Naive thymus-derived CD4-positive, alpha-beta T cell (primary cell): ENCODE measurements at regions of chr1 and their contacts with region 1.

Region 1: DNA sequence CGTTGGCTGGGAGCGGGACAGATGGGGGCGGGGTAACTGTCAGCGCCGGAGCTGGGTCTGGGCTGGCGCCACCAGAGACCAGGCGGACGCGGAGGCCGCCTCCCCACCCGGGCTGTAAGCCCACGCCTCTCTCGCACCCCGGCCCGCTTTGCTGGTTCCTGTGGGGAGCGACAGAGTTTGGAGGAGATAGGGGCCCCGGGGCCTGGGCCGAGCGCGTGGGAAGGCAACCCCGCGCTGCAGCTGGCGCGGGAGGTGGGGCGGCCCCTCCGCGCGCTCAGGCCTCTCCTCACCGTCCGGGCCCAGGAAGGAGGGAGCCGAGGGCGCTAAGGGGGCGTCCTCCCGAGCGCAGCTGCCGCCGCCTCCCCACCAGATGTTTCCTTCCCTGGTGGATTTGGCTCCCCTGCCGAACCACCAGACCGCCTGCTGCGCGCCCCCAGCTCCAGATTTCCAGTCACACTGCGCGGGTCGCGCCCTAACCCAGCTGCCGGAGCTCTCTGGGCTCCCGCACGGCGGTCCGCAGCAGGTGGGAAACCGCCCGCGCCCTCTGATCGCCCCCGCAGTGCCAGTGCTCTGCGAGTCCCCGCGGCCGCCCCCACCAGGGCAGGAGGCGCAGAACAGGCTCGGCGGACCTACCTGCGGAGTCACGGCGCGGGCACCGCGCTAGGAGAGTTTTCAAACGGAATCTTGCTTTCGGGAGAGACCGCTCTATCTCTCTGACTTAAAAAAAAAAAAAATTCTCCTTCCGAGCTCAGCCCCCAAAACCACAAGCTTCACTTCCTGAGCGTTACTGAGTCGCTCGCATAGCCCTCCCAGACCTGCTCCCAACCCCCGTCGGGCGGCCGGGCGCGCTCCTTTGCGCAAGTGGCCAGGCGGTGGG is 1.1 kb downstream of the GFI1 start:
- DNase-seq: peak; percentile 60 to 89 (median 74)
- ATAC-seq: peak; percentile 77
- H3K4me3 ChIP-seq: peak overlapping the region; percentile 83
- H3K4me3 Mint-ChIP-seq: peak overlapping the region; percentile 91 to 99 (median 94)
- H3K27ac ChIP-seq: peak overlapping the region; percentile 67
- H3K27ac Mint-ChIP-seq: peak overlapping the region; percentile 85 to 93 (median 90)
- H3K4me1 ChIP-seq: peaks cover 14 to 15% of the 10 kb centered on the region in 2 donors
- H3K4me1 Mint-ChIP-seq: peaks cover 26 to 45% (median 37%) of the 10 kb centered on the region in 7 donors
- H3K27me3 ChIP-seq: no peaks in the 10 kb centered on the region
- H3K27me3 Mint-ChIP-seq: peaks cover 0 to 3% (median 0%) of the 10 kb centered on the region in 5 donors

Region 2: DNA sequence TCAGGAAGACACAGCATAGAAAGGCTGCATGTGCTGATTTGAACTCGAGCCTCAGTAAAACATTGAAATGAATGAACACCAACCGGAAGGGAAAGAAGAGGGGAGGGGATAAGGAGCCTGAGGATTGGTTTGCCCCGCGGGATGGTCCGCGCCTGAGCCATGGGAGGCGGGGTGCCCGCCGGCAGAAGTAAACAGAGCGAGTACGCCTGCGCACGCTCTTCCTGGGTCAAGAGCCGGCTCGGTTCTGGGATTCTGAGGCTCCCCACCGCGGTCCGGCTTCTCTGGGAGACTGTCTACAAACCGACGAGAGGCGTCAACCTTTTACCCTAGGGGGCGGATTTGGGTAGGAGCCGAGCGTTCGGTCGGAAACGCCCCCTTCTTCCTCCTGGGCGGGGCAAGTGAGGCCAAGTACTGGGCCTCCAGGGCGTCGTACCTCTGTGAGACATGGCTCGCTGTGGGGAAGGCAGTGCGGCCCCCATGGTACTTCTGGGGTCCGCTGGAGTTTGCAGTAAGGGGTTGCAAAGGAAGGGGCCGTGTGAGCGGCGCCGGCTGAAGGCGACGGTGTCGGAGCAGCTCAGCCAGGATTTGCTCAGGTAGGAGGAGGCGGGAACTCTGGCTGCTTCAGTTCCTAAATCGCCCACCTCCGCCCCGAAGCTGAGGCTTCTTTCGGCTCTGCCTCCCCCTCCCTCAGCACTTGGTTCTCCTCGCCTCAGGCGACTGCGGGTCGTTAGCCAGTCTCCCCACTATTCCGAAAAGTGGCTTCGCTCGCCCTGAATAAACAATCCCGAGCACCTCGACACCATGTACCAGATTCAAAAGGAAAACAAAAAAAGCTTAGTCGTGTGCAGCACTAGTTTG is 405.3 kb before region 1 on chr1 and contains the start of gene BTBD8:
- CTCF ChIA-PET with region 1: no interaction called
- POLR2A ChIA-PET with region 1: no interaction called
- intact Hi-C with region 1: loop called in 1 of 2 experiments (anchors 2 kb)
- DNase-seq: peak; percentile 67 to 87 (median 85)
- ATAC-seq: peak; percentile 98
- H3K4me3 ChIP-seq: peak within 1 kb of the TSS; percentile 79
- H3K4me3 Mint-ChIP-seq: peak within 1 kb of the TSS; percentile 87 to 99 (median 98)
- H3K27ac ChIP-seq: peak within 1 kb of the TSS; percentile 74
- H3K27ac Mint-ChIP-seq: peak within 1 kb of the TSS; percentile 85 to 97 (median 93)
- H3K4me1 ChIP-seq: peaks cover 0 to 3% of the 10 kb centered on the region in 2 donors
- H3K4me1 Mint-ChIP-seq: peaks cover 5 to 36% (median 29%) of the 10 kb centered on the region in 7 donors
- H3K27me3 ChIP-seq: no peaks in the 10 kb centered on the region
- H3K27me3 Mint-ChIP-seq: no peaks in the 10 kb centered on the region
- total RNA-seq, gene BTBD8: 2.4 to 11.4 (median 5.3) TPM

Region 3: DNA sequence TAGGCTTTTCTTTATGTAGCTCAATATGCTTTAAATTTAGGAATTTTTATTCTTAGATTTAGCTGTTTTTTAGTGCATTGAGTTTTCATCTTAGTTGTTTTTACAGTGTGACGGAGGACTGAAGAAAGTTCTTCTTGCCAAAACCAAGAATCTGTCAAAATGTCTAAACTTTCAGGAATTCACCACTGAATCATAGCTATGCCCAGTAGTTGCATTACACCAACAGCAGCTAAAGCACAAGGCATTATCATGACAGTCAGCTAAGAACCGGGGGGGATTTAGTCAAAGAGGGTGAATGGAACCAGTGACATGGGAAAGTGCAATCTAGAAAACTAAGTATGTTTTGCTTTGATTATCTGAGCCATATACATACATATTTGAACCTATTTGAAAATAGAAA is 274.5 kb before region 1 on chr1:
- CTCF ChIA-PET with region 1: no interaction called
- POLR2A ChIA-PET with region 1: no interaction called
- intact Hi-C with region 1: no loop called
- DNase-seq: no peak
- ATAC-seq: no peak
- H3K4me3 ChIP-seq: no peak overlapping the region
- H3K4me3 Mint-ChIP-seq: no peak overlapping the region
- H3K27ac ChIP-seq: no peak overlapping the region
- H3K27ac Mint-ChIP-seq: no peak overlapping the region
- H3K4me1 ChIP-seq: peaks cover 0 to 17% of the 10 kb centered on the region in 2 donors
- H3K4me1 Mint-ChIP-seq: peaks cover 7 to 33% (median 23%) of the 10 kb centered on the region in 7 donors
- H3K27me3 ChIP-seq: no peaks in the 10 kb centered on the region
- H3K27me3 Mint-ChIP-seq: peaks cover 0 to 2% (median 0%) of the 10 kb centered on the region in 5 donors

Region 4: GRCh38 chr1:92317836-92318493 is 167.7 kb before region 1 on chr1:
- CTCF ChIA-PET with region 1: interaction called, 8 read pairs
- POLR2A ChIA-PET with region 1: interaction called, 6 read pairs
- intact Hi-C with region 1: loop called (anchors 1 kb)
- DNase-seq: peak in 3 of 9 donors; percentile 7 to 27 (median 8)
- ATAC-seq: peak; percentile 46
- H3K4me3 ChIP-seq: no peak overlapping the region
- H3K4me3 Mint-ChIP-seq: peak overlapping the region; percentile 16 to 83 (median 65)
- H3K27ac ChIP-seq: no peak overlapping the region
- H3K27ac Mint-ChIP-seq: peak overlapping the region; percentile 61 to 96 (median 78)
- H3K4me1 ChIP-seq: peaks cover 40 to 55% of the 10 kb centered on the region in 2 donors
- H3K4me1 Mint-ChIP-seq: peaks cover 35 to 64% (median 62%) of the 10 kb centered on the region in 7 donors
- H3K27me3 ChIP-seq: no peaks in the 10 kb centered on the region
- H3K27me3 Mint-ChIP-seq: no peaks in the 10 kb centered on the region

Region 5: GRCh38 chr1:92502247-92502646 is 16.6 kb after region 1 on chr1:
- CTCF ChIA-PET with region 1: no interaction called
- POLR2A ChIA-PET with region 1: interaction called, 4 read pairs
- intact Hi-C with region 1: loop called (anchors 2 kb)
- DNase-seq: no peak
- ATAC-seq: no peak
- H3K4me3 ChIP-seq: no peak overlapping the region
- H3K4me3 Mint-ChIP-seq: no peak overlapping the region
- H3K27ac ChIP-seq: no peak overlapping the region
- H3K27ac Mint-ChIP-seq: peak overlapping the region in 1 of 9 donors; percentile 23
- H3K4me1 ChIP-seq: no peaks in the 10 kb centered on the region
- H3K4me1 Mint-ChIP-seq: peaks cover 11 to 38% (median 24%) of the 10 kb centered on the region in 7 donors
- H3K27me3 ChIP-seq: no peaks in the 10 kb centered on the region
- H3K27me3 Mint-ChIP-seq: no peaks in the 10 kb centered on the region

Region 6: GRCh38 chr1:92583821-92584760 is 98.5 kb after region 1 on chr1:
- CTCF ChIA-PET with region 1: interaction called, 6 read pairs
- POLR2A ChIA-PET with region 1: interaction called, 5 read pairs
- intact Hi-C with region 1: loop called (anchors 1 kb)
- DNase-seq: peak in 7 of 9 donors; percentile 50 to 82 (median 76)
- ATAC-seq: peak; percentile 93
- H3K4me3 ChIP-seq: peak overlapping the region; percentile 30
- H3K4me3 Mint-ChIP-seq: peak overlapping the region; percentile 25 to 88 (median 68)
- H3K27ac ChIP-seq: peak overlapping the region; percentile 47
- H3K27ac Mint-ChIP-seq: peak overlapping the region; percentile 41 to 93 (median 86)
- H3K4me1 ChIP-seq: peaks cover 27 to 38% of the 10 kb centered on the region in 2 donors
- H3K4me1 Mint-ChIP-seq: peaks cover 22 to 66% (median 63%) of the 10 kb centered on the region in 7 donors
- H3K27me3 ChIP-seq: no peaks in the 10 kb centered on the region
- H3K27me3 Mint-ChIP-seq: no peaks in the 10 kb centered on the region

Region 7: GRCh38 chr1:92960395-92961130 is 474.9 kb after region 1 on chr1:
- CTCF ChIA-PET with region 1: no interaction called
- POLR2A ChIA-PET with region 1: no interaction called
- intact Hi-C with region 1: loop called (anchors 5 to 10 kb)
- DNase-seq: peak in 8 of 9 donors; percentile 57 to 85 (median 76)
- ATAC-seq: peak; percentile 65
- H3K4me3 ChIP-seq: peak overlapping the region; percentile 58
- H3K4me3 Mint-ChIP-seq: peak overlapping the region in 9 of 10 donors; percentile 86 to 97 (median 90)
- H3K27ac ChIP-seq: peak overlapping the region; percentile 100
- H3K27ac Mint-ChIP-seq: peak overlapping the region; percentile 95 to 99 (median 98)
- H3K4me1 ChIP-seq: peaks cover 39 to 55% of the 10 kb centered on the region in 2 donors
- H3K4me1 Mint-ChIP-seq: peaks cover 37 to 46% (median 41%) of the 10 kb centered on the region in 7 donors
- H3K27me3 ChIP-seq: no peaks in the 10 kb centered on the region
- H3K27me3 Mint-ChIP-seq: no peaks in the 10 kb centered on the region